AG04450 (cell line): ENCODE measurements at regions of chr17 and their contacts with region 1.

Region 1: DNA sequence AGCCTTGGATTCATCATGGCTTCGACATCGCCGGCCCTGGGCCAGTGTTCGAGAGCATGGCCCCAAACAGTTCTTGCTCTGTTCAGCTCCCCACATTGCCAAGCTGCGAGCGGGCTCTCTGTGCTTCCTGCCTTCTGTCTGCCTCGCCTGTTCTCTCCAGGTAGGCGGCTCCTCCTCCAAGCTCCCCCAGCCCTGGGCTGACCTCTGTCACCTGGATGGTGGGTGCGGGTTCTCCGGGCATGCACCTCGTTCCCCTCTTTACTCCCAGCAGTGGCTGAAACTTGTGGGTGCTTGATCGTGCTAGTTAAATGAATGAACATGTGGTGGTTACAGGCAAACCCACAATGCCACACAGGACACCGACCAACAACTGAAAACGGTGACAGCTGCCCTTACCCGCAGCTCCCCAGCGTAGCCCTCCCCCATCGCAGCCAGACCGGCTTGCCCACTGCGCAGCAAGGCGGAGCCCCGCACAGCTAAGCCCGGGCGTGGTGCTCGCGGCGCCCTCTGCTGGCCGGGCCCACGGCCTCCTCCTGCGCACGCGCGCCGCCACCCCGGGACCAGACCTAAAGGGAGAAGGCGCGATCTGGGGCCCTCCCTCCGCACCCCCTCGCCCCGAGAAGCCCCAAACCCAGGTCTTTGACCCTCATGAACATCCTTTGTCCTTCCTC is 23.0 kb upstream of the EIF1 start:
- DNase-seq: peak; percentile 46
- H3K4me3 ChIP-seq: peak overlapping the region; percentile 60
- H3K27ac ChIP-seq: peak overlapping the region; percentile 85
- H3K27me3 ChIP-seq: no peaks in the 10 kb centered on the region
- CTCF ChIP-seq: peak; percentile 86

Region 2: GRCh38 chr17:40803617-40804082 is 862.1 kb before region 1 on chr17:
- CTCF ChIA-PET with region 1: interaction called, 34 read pairs
- POLR2A ChIA-PET with region 1: no interaction called
- DNase-seq: peak; percentile 16
- H3K4me3 ChIP-seq: no peak overlapping the region
- H3K27ac ChIP-seq: no peak overlapping the region
- H3K27me3 ChIP-seq: peaks cover 33% of the 10 kb centered on the region
- CTCF ChIP-seq: peak; percentile 95

Region 3: DNA sequence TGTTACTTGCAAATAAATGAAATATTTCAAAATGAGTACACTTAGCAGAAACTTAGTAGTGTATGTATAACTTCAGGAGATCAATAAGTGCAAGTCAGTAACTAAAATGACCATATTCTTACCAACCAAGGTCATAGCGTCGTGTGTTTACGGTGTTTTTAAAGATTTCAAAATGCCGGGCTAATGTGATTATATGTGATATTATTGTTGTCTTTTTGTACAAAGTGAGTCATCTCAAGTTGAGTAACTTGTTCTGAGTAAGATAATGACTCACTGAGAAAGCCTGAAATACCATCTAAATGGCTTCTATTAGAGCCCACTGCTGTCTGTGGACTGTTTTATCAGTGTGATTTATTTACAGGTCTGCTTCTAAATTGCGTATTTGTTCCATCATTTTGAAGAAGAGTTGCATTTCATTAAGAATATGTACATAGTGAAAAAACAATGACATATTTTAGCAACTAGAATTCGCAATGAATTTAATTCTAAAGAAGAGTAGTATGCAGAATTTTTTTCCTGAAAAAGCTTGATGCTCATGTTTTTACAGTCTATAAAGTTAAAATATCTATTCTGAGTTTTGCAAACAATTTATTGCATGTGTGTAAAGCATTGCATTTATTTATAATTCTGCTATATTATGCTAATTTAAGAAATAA is 811.4 kb before region 1 on chr17:
- CTCF ChIA-PET with region 1: interaction called, 133 read pairs
- POLR2A ChIA-PET with region 1: no interaction called
- DNase-seq: peak; percentile 47
- H3K4me3 ChIP-seq: no peak overlapping the region
- H3K27ac ChIP-seq: no peak overlapping the region
- H3K27me3 ChIP-seq: no peaks in the 10 kb centered on the region
- CTCF ChIP-seq: no peak

Region 4: GRCh38 chr17:40909351-40909750 is 756.4 kb before region 1 on chr17:
- CTCF ChIA-PET with region 1: interaction called, 25 read pairs
- POLR2A ChIA-PET with region 1: no interaction called
- DNase-seq: peak; percentile 92
- H3K4me3 ChIP-seq: no peak overlapping the region
- H3K27ac ChIP-seq: peak overlapping the region; percentile 89
- H3K27me3 ChIP-seq: no peaks in the 10 kb centered on the region
- CTCF ChIP-seq: peak; percentile 85

Region 5: GRCh38 chr17:41678907-41679739 is 13.4 kb after region 1 on chr17:
- CTCF ChIA-PET with region 1: interaction called, 23 read pairs
- POLR2A ChIA-PET with region 1: no interaction called
- DNase-seq: no peak
- H3K4me3 ChIP-seq: no peak overlapping the region
- H3K27ac ChIP-seq: no peak overlapping the region
- H3K27me3 ChIP-seq: peaks cover 11% of the 10 kb centered on the region
- CTCF ChIP-seq: no peak

Region 6: DNA sequence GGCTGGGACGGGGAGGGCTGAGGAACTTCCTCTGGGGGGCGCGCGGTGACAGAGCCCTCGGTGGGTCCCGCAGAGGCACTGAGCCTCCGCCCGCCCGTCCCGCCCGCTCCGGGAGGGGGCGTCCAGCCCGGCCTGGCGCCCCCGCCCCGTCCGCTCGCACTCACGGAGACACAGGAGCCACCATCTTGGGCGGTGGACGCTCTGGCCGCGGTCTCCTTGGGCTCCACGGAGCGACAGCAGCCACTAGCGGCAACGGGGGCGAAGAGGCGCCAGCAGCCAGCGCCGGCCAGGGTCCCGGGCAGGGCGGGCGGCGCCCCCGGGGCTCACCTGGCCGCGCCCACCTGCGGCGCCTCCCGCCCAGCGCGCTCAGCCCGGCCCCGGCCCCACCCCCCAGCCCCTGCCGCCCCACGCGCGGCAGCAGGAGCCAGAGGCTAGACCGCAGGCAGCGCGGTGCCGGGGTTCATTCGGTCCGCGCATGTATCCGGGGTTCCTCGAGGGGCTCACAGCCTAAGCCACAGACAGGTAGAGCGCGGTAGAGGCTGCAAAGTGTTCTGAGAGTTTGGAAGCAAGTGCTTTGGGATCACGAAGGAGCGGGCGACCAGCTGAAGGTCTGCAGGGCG is 384.8 kb after region 1 on chr17 and contains the start of gene C17orf113:
- CTCF ChIA-PET with region 1: no interaction called
- POLR2A ChIA-PET with region 1: no interaction called
- DNase-seq: no peak
- H3K4me3 ChIP-seq: peak within 1 kb of the TSS; percentile 48
- H3K27ac ChIP-seq: no peak within 1 kb of the TSS
- H3K27me3 ChIP-seq: peaks cover 62% of the 10 kb centered on the region
- CTCF ChIP-seq: peak; percentile 5; the same call in 1 of the 2 replicates
- polyA plus RNA-seq, gene C17orf113: 0.07 and 0.09 TPM in 2 replicates